HCT116 (cell line): ENCODE measurements at regions of chr10 and their contacts with region 1.

Region 1: GRCh38 chr10:110137142-110137545 is 70.3 kb upstream of the MXI1 start:
- DNase-seq: peak; percentile 55
- ATAC-seq: peak; percentile 82
- H3K4me3 ChIP-seq: no peak overlapping the region
- H3K27ac ChIP-seq: no peak overlapping the region
- H3K4me1 ChIP-seq: peaks cover 0 to 2% of the 10 kb centered on the region in 2 experiments; a peak in 1 of 4 replicates
- H3K27me3 ChIP-seq: no peaks in the 10 kb centered on the region
- CTCF ChIP-seq: peak; percentile 77 to 98 (median 91)
- POLR2A ChIP-seq: no peak
- RAD21 ChIP-seq: peak; percentile 95

Region 2: GRCh38 chr10:109922976-109923921 is 213.9 kb before region 1 on chr10 and contains the start of gene XPNPEP1:
- CTCF ChIA-PET with region 1: no interaction called
- POLR2A ChIA-PET with region 1: no interaction called
- RAD21 ChIA-PET with region 1: no interaction called
- intact Hi-C with region 1: no loop called
- DNase-seq: peak; percentile 60
- ATAC-seq: peak; percentile 95
- H3K4me3 ChIP-seq: peak within 1 kb of the TSS; percentile 88 to 92
- H3K27ac ChIP-seq: peak within 1 kb of the TSS; percentile 70
- H3K4me1 ChIP-seq: peaks cover 12 to 21% of the 10 kb centered on the region in 2 experiments; a peak in 3 of 4 replicates
- H3K27me3 ChIP-seq: no peaks in the 10 kb centered on the region
- CTCF ChIP-seq: no peak
- POLR2A ChIP-seq: peak; percentile 93
- RAD21 ChIP-seq: no peak
- total RNA-seq, gene XPNPEP1: 87.3 TPM

Region 3: GRCh38 chr10:110029450-110029849 is 107.7 kb before region 1 on chr10:
- CTCF ChIA-PET with region 1: no interaction called
- POLR2A ChIA-PET with region 1: no interaction called
- RAD21 ChIA-PET with region 1: no interaction called
- intact Hi-C with region 1: no loop called
- DNase-seq: no peak
- ATAC-seq: no peak
- H3K4me3 ChIP-seq: no peak overlapping the region
- H3K27ac ChIP-seq: no peak overlapping the region
- H3K4me1 ChIP-seq: no peaks in the 10 kb centered on the region
- H3K27me3 ChIP-seq: no peaks in the 10 kb centered on the region
- CTCF ChIP-seq: no peak
- POLR2A ChIP-seq: no peak
- RAD21 ChIP-seq: no peak

Region 4: GRCh38 chr10:110210674-110211464 is 73.7 kb after region 1 on chr10:
- CTCF ChIA-PET with region 1: interaction called, 11 read pairs
- POLR2A ChIA-PET with region 1: interaction called, 3 read pairs
- RAD21 ChIA-PET with region 1: interaction called in 1 of 2 experiments, 7 read pairs
- intact Hi-C with region 1: loop called (anchors 5 kb)
- DNase-seq: peak; percentile 99
- ATAC-seq: peak; percentile 73
- H3K4me3 ChIP-seq: peak overlapping the region; percentile 67 to 76
- H3K27ac ChIP-seq: peak overlapping the region; percentile 46; the same call in 1 of the 2 replicates
- H3K4me1 ChIP-seq: peaks cover 14 to 51% of the 10 kb centered on the region in 2 experiments
- H3K27me3 ChIP-seq: no peaks in the 10 kb centered on the region
- CTCF ChIP-seq: no peak
- POLR2A ChIP-seq: peak; percentile 33
- RAD21 ChIP-seq: no peak

Region 5: DNA sequence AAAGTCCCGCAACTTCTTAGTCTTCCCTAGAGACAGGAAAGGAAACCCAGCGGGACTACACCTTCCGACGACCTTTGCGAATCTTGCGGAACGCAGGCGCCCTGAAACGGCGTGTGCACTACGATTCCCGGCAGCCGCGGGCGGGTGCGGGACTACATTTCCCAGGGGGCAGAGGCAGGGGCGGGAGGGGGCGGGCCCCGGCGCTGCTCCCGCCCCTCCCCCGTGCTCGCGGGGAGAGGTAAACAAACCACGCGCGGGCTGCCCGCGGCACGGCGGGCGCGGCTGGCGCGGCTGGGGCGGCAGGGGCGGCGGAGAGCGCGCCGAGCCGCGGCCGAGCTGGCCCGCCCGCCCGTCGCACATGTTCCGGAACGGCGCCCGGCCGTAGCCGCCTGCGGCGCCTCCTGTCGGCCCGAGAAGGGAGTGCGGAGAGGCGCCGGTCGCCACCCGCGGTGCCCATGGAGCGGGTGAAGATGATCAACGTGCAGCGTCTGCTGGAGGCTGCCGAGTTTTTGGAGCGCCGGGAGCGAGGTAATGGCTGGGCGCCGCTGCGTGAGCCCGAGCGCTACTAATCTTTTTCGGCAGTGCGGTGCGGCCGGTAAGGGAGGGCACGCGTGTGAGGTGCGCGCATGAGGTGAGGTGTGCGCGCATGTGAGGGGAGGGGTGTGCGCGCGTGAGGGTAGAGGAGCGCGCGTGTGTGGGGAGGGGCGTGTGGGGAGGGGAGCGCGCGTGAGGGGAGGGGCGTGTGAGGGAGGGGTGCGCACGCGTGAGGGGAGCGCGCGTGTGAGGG is 88.8 kb after region 1 on chr10:
- CTCF ChIA-PET with region 1: interaction called, 38 read pairs
- POLR2A ChIA-PET with region 1: no interaction called
- RAD21 ChIA-PET with region 1: interaction called in 1 of 2 experiments, 5 read pairs
- intact Hi-C with region 1: loop called (anchors 1 kb)
- DNase-seq: peak; percentile 92
- ATAC-seq: peak; percentile 83
- H3K4me3 ChIP-seq: peak overlapping the region; percentile 56 to 63
- H3K27ac ChIP-seq: peak overlapping the region; percentile 93
- H3K4me1 ChIP-seq: peaks cover 24 to 34% of the 10 kb centered on the region in 2 experiments
- H3K27me3 ChIP-seq: no peaks in the 10 kb centered on the region
- CTCF ChIP-seq: peak in 2 of 3 experiments; percentile 64 to 82; a peak in 4 of 6 replicates
- POLR2A ChIP-seq: no peak
- RAD21 ChIP-seq: no peak

Region 6: DNA sequence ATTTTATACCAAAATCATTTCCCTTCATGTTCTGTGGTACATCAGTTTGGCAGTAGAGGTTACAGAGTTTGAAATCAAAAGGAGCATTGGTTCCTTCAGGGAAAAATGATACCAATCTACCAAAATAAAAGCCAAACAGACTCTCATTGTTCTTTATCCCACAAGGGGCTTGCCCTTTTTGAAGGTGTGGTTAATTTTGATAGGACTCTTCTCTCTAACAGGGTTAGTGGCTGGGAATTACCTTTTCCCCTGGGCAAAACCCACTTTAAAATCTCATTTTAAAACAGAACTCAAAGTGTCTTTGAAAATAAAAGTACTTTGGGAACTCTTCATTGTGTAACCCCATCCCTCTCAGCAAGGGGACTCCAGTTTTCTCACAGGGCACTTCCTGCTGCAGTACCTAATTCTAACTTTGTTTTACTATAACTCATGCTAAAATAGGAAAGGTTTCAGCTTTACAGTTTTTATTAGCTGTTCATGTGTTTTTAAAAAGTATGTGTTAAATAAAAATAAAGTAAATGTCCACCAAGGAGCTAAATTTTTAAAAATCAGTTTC is 137.0 kb after region 1 on chr10:
- CTCF ChIA-PET with region 1: interaction called, 46 read pairs
- POLR2A ChIA-PET with region 1: no interaction called
- RAD21 ChIA-PET with region 1: interaction called in 1 of 2 experiments, 7 read pairs
- intact Hi-C with region 1: loop called (anchors 1 kb)
- DNase-seq: no peak
- ATAC-seq: peak; percentile 34; the same call in 1 of the 2 replicates
- H3K4me3 ChIP-seq: no peak overlapping the region
- H3K27ac ChIP-seq: no peak overlapping the region
- H3K4me1 ChIP-seq: peaks cover 4 to 9% of the 10 kb centered on the region in 2 experiments; a peak in 2 of 4 replicates
- H3K27me3 ChIP-seq: no peaks in the 10 kb centered on the region
- CTCF ChIP-seq: no peak
- POLR2A ChIP-seq: no peak
- RAD21 ChIP-seq: no peak

Region 7: GRCh38 chr10:110279407-110279986 is 142.4 kb after region 1 on chr10:
- CTCF ChIA-PET with region 1: interaction called, 46 read pairs
- POLR2A ChIA-PET with region 1: no interaction called
- RAD21 ChIA-PET with region 1: interaction called in 1 of 2 experiments, 7 read pairs
- intact Hi-C with region 1: loop called (anchors 1 kb)
- DNase-seq: peak; percentile 54
- ATAC-seq: peak; percentile 86
- H3K4me3 ChIP-seq: no peak overlapping the region
- H3K27ac ChIP-seq: no peak overlapping the region
- H3K4me1 ChIP-seq: peaks cover 0 to 3% of the 10 kb centered on the region in 2 experiments; a peak in 1 of 4 replicates
- H3K27me3 ChIP-seq: no peaks in the 10 kb centered on the region
- CTCF ChIP-seq: peak; percentile 79 to 94 (median 91)
- POLR2A ChIP-seq: no peak
- RAD21 ChIP-seq: peak; percentile 95

Region 8: GRCh38 chr10:110304780-110305421 is 167.8 kb after region 1 on chr10 and contains the start of gene SMNDC1:
- CTCF ChIA-PET with region 1: interaction called, 14 read pairs
- POLR2A ChIA-PET with region 1: no interaction called
- RAD21 ChIA-PET with region 1: interaction called in 1 of 2 experiments, 3 read pairs
- intact Hi-C with region 1: no loop called
- DNase-seq: peak; percentile 99
- ATAC-seq: peak; percentile 94
- H3K4me3 ChIP-seq: peak within 1 kb of the TSS; percentile 88 to 91
- H3K27ac ChIP-seq: peak within 1 kb of the TSS; percentile 77
- H3K4me1 ChIP-seq: peaks cover 12 to 26% of the 10 kb centered on the region in 2 experiments; a peak in 3 of 4 replicates
- H3K27me3 ChIP-seq: no peaks in the 10 kb centered on the region
- CTCF ChIP-seq: no peak
- POLR2A ChIP-seq: peak; percentile 77
- RAD21 ChIP-seq: no peak
- total RNA-seq, gene SMNDC1: 61.7 TPM

Region 9: DNA sequence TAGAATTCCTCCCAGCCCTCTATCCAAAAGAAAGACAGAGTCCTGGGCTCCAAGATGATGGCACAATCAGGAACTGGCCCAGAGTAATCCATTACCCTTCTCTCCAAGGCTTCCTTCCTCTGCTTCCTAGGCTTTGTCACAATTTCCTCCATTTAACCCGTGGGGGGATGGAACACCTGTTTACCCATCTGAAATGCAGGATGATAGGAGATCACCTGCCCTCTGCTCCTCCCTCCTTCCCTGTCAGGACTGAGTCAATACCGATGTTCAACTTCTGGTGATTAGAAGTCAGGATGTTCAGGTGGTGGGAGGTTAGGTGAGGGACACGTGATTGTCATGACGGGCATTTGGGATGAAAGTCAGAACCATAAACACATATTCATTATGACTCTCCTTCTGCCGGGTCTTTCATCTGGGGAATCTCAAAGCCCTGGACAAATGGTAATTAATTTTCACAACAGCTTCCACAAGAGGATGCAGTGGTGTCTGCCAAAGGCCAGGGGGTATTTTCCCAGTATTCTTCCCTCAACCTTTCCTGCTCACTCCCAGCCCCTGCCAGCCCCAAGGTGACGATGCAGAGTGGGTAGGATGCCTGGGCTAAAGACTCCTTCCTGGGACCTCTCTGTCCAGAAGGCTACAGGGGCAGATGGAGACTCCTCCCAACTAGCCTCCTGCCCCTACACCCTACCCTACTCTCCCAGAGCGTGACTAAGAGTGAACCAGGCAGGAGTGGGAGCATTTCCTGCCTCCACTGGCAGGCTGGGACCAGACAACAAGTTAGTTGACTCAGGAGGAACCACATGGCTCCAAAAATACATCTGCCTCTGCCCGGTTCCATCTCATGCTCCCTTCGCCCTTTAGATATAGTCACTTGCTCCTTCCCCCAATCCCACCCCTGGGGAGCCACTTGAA is 388.5 kb after region 1 on chr10:
- CTCF ChIA-PET with region 1: no interaction called
- POLR2A ChIA-PET with region 1: no interaction called
- RAD21 ChIA-PET with region 1: no interaction called
- intact Hi-C with region 1: no loop called
- DNase-seq: no peak
- ATAC-seq: peak; percentile 14
- H3K4me3 ChIP-seq: peak overlapping the region in 1 of 2 experiments; percentile 16; a peak in 2 of 4 replicates
- H3K27ac ChIP-seq: peak overlapping the region; percentile 11; the same call in 1 of the 2 replicates
- H3K4me1 ChIP-seq: peaks cover 61 to 82% of the 10 kb centered on the region in 2 experiments
- H3K27me3 ChIP-seq: no peaks in the 10 kb centered on the region
- CTCF ChIP-seq: no peak
- POLR2A ChIP-seq: no peak
- RAD21 ChIP-seq: no peak

Region 10: DNA sequence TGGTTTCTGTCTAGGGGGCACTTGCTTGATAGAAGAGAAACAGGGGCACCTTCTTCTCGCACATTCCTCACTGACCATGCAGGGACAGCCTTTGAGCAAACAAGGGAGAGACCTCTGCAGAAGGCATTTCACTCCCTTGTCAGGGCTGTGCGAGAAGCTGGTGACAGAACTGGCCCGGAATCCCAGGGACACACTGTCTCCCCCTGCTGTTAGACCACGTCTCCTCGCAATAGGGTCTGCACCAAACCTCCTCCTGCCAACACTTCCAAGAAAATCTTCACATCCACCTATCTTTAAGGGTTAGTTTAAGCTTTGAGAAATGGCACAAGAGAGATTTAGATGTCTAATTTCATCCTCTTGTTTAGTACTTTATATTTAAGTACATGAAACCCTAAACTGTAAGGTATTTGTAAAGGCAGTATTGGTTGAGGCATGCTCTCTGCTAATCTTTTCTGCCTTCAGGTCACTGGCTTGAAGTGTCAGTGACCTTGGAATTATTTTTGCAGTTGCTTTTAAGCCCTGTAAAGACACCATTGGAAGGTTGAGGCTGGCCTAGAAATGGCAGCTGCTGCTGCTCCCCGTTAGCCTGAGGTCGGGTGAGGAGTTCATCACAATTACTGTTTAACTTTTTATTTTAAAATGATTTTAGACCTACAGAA is 544.0 kb after region 1 on chr10:
- CTCF ChIA-PET with region 1: no interaction called
- POLR2A ChIA-PET with region 1: no interaction called
- RAD21 ChIA-PET with region 1: no interaction called
- intact Hi-C with region 1: loop called (anchors 10 kb)
- DNase-seq: peak; percentile 22
- ATAC-seq: peak; percentile 95
- H3K4me3 ChIP-seq: no peak overlapping the region
- H3K27ac ChIP-seq: no peak overlapping the region
- H3K4me1 ChIP-seq: no peaks in the 10 kb centered on the region
- H3K27me3 ChIP-seq: no peaks in the 10 kb centered on the region
- CTCF ChIP-seq: peak; percentile 84 to 97 (median 91)
- POLR2A ChIP-seq: no peak
- RAD21 ChIP-seq: peak; percentile 79

Region 11: DNA sequence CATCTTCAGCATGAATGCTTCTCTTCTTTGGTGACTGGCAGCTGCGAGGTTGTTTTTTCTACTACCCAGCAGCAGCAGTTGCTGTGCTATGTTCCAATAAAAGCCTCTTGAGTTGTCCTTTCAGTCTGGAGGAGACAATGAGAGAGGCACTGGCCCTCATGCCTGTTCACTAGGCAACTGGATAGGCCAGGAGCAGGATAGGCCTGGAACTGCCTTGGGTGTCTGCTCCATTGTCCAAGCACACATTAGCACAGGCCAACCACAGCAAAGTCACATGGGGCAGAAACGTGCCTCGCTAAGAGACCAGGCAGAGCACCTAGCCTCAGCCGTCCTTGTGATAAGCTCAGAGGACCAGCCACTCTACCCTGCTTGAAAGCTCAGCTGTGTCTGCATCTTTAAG is 657.7 kb after region 1 on chr10:
- CTCF ChIA-PET with region 1: no interaction called
- POLR2A ChIA-PET with region 1: no interaction called
- RAD21 ChIA-PET with region 1: no interaction called
- intact Hi-C with region 1: no loop called
- DNase-seq: no peak
- ATAC-seq: no peak
- H3K4me3 ChIP-seq: no peak overlapping the region
- H3K27ac ChIP-seq: no peak overlapping the region
- H3K4me1 ChIP-seq: no peaks in the 10 kb centered on the region
- H3K27me3 ChIP-seq: no peaks in the 10 kb centered on the region
- CTCF ChIP-seq: no peak
- POLR2A ChIP-seq: no peak
- RAD21 ChIP-seq: no peak